Panc1 (cell line): ENCODE measurements at regions of chr2 and their contacts with region 1.

Region 1: GRCh38 chr2:204027091-204027490 is 90.5 kb downstream of the ICOS start:
- DNase-seq: no peak
- ATAC-seq: no peak
- H3K4me3 ChIP-seq: no peak overlapping the region
- H3K27ac ChIP-seq: no peak overlapping the region
- H3K4me1 ChIP-seq: no peaks in the 10 kb centered on the region
- H3K27me3 ChIP-seq: peaks cover 2% of the 10 kb centered on the region; the same call in 1 of the 2 replicates
- CTCF ChIP-seq: no peak

Region 2: GRCh38 chr2:203820969-203821368 is 206.1 kb before region 1 on chr2:
- CTCF ChIA-PET with region 1: no interaction called
- POLR2A ChIA-PET with region 1: no interaction called
- in situ Hi-C with region 1: no loop called
- intact Hi-C with region 1: no loop called
- DNase-seq: no peak
- ATAC-seq: no peak
- H3K4me3 ChIP-seq: no peak overlapping the region
- H3K27ac ChIP-seq: no peak overlapping the region
- H3K4me1 ChIP-seq: no peaks in the 10 kb centered on the region
- H3K27me3 ChIP-seq: peaks cover 15% of the 10 kb centered on the region
- CTCF ChIP-seq: no peak

Region 3: GRCh38 chr2:204012072-204012653 is 14.9 kb before region 1 on chr2:
- CTCF ChIA-PET with region 1: no interaction called
- POLR2A ChIA-PET with region 1: no interaction called
- in situ Hi-C with region 1: no loop called
- intact Hi-C with region 1: no loop called
- DNase-seq: no peak
- ATAC-seq: no peak
- H3K4me3 ChIP-seq: no peak overlapping the region
- H3K27ac ChIP-seq: no peak overlapping the region
- H3K4me1 ChIP-seq: no peaks in the 10 kb centered on the region
- H3K27me3 ChIP-seq: no peaks in the 10 kb centered on the region
- CTCF ChIP-seq: no peak

Region 4: GRCh38 chr2:204143216-204144014 is 116.3 kb after region 1 on chr2:
- CTCF ChIA-PET with region 1: no interaction called
- POLR2A ChIA-PET with region 1: no interaction called
- in situ Hi-C with region 1: no loop called
- intact Hi-C with region 1: loop called (anchors 5 kb)
- DNase-seq: no peak
- ATAC-seq: no peak
- H3K4me3 ChIP-seq: no peak overlapping the region
- H3K27ac ChIP-seq: no peak overlapping the region
- H3K4me1 ChIP-seq: peaks cover 4% of the 10 kb centered on the region; the same call in 1 of the 2 replicates
- H3K27me3 ChIP-seq: peaks cover 14% of the 10 kb centered on the region; the same call in 1 of the 2 replicates
- CTCF ChIP-seq: no peak